ENCODE measurements at regions of chr7 and their contacts with region 1.

Region 1: DNA sequence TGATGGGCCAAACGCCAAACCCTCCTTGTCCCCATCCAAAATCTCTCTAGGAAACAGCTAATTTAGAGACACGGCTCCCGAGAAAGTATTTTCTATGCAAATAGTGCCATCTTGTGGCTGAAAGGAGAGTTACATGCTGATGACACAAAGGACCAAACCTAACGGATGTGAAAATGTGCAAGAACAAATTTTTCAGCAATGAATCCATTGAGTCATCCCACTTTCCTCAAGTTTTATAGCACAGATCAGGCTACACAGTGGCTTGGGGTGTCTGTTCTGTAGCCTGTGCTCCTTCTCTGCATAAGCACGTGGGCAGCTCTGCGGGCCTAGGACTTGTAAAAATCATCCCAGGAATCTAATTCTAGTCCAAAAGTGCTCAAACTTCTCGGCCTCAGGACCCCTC is 154.8 kb upstream of the PRR15 start:
- DNase-seq: peak; percentile 31
- H3K4me3 Mint-ChIP-seq: no peak overlapping the region
- H3K27ac Mint-ChIP-seq: no peak overlapping the region
- H3K4me1 Mint-ChIP-seq: no peaks in the 10 kb centered on the region
- H3K27me3 Mint-ChIP-seq: peaks cover 16% of the 10 kb centered on the region

Region 2: GRCh38 chr7:28921822-28922221 is 487.0 kb before region 1 on chr7:
- intact Hi-C with region 1: loop called (anchors 1 kb)
- DNase-seq: no peak
- H3K4me3 Mint-ChIP-seq: no peak overlapping the region
- H3K27ac Mint-ChIP-seq: no peak overlapping the region
- H3K4me1 Mint-ChIP-seq: peaks cover 13% of the 10 kb centered on the region
- H3K27me3 Mint-ChIP-seq: peaks cover 14% of the 10 kb centered on the region

Region 3: GRCh38 chr7:28926871-28927597 is 481.8 kb before region 1 on chr7:
- intact Hi-C with region 1: loop called (anchors 1 kb)
- DNase-seq: peak; percentile 44
- H3K4me3 Mint-ChIP-seq: peak overlapping the region; percentile 79
- H3K27ac Mint-ChIP-seq: no peak overlapping the region
- H3K4me1 Mint-ChIP-seq: peaks cover 25% of the 10 kb centered on the region
- H3K27me3 Mint-ChIP-seq: peaks cover 27% of the 10 kb centered on the region

Region 4: GRCh38 chr7:29105752-29106668 is 302.8 kb before region 1 on chr7:
- intact Hi-C with region 1: loop called (anchors 1 kb)
- DNase-seq: peak; percentile 8
- H3K4me3 Mint-ChIP-seq: no peak overlapping the region
- H3K27ac Mint-ChIP-seq: no peak overlapping the region
- H3K4me1 Mint-ChIP-seq: peaks cover 7% of the 10 kb centered on the region
- H3K27me3 Mint-ChIP-seq: peaks cover 15% of the 10 kb centered on the region

Region 5: GRCh38 chr7:29189743-29190201 is 219.1 kb before region 1 on chr7:
- intact Hi-C with region 1: loop called (anchors 1 kb)
- DNase-seq: no peak
- H3K4me3 Mint-ChIP-seq: no peak overlapping the region
- H3K27ac Mint-ChIP-seq: no peak overlapping the region
- H3K4me1 Mint-ChIP-seq: no peaks in the 10 kb centered on the region
- H3K27me3 Mint-ChIP-seq: peaks cover 39% of the 10 kb centered on the region

Region 6: GRCh38 chr7:29194594-29195427 is 214.0 kb before region 1 on chr7 and contains the start of gene CHN2:
- intact Hi-C with region 1: loop called (anchors 1 kb)
- DNase-seq: peak; percentile 12
- H3K4me3 Mint-ChIP-seq: peak within 1 kb of the TSS; percentile 78
- H3K27ac Mint-ChIP-seq: no peak within 1 kb of the TSS
- H3K4me1 Mint-ChIP-seq: peaks cover 18% of the 10 kb centered on the region
- H3K27me3 Mint-ChIP-seq: peaks cover 66% of the 10 kb centered on the region
- total RNA-seq, gene CHN2: not detected in 2 replicates

Region 7: DNA sequence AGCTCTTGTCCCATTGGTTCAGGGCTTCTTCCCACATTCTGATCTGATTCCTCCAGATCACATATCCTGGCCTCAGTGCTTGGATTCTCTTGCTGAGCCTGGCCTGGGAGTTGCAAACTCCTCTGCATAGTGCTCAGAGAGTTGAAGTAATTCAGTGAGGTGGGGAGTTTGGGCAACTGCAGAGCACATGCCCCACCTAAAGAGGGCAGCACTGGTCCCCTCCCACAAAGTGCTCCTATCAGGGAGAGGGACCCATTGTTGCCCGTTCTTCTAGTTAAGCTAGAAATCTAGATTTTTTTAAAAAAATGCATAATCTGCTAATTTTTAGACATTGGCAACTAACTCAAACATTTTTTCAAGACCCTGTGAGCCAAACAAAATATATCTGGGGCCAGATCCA is 169.2 kb before region 1 on chr7:
- intact Hi-C with region 1: loop called (anchors 2 kb)
- DNase-seq: no peak
- H3K4me3 Mint-ChIP-seq: no peak overlapping the region
- H3K27ac Mint-ChIP-seq: no peak overlapping the region
- H3K4me1 Mint-ChIP-seq: peaks cover 13% of the 10 kb centered on the region
- H3K27me3 Mint-ChIP-seq: peaks cover 28% of the 10 kb centered on the region